Mammary epithelial cell (primary cell): ENCODE measurements at regions of chr14 and their contacts with region 1.

Region 1: DNA sequence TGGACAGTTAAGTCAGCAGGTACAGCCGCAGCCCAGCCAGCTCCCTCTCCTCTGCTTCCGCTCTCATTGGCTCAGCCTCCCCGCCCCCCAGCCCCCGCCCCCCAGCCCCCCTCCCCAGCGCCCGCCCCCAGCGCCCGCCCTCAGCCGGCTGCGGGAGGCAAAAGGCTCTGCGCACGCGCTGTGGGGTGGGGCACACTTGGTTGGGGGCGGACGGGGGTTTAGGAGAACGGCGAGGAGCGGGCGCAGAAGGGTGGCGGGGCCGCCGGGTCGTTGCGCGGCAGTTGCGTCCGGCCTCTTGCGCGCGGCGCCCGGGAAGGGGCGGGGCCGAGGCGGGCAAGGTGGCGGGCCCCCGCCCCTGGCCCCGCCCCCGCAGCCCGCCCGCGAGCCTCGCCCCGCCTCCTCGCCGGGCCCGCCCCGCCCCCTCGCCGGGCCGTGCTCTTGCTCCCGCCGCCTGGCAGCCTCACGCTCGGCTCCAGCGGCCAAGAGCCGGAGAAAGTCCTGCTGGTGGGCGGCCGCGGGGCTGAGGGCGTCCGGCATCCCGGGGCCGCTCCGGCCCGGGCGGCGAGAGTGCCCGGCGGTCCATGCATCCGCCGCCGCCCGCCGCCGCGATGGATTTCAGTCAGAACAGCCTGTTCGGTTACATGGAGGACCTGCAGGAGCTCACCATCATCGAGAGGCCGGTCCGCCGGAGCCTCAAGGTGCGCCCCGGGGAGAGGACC is at the start of gene PPP4R4:
- DNase-seq: peak; percentile 71
- H3K4me3 ChIP-seq: peak within 1 kb of the TSS; percentile 68 to 87 (median 70)
- H3K27ac ChIP-seq: peak within 1 kb of the TSS; percentile 45
- H3K4me1 ChIP-seq: peaks cover 45% of the 10 kb centered on the region
- H3K27me3 ChIP-seq: no peaks in the 10 kb centered on the region
- CTCF ChIP-seq: no peak
- total RNA-seq, gene PPP4R4: 6.3 to 19.3 TPM

Region 2: GRCh38 chr14:94143239-94143638 is 30.8 kb before region 1 on chr14:
- CTCF ChIA-PET with region 1: interaction called, 10 read pairs
- dilution Hi-C with region 1: no loop called
- in situ Hi-C with region 1: no loop called
- intact Hi-C with region 1: no loop called
- DNase-seq: no peak
- H3K4me3 ChIP-seq: no peak overlapping the region
- H3K27ac ChIP-seq: no peak overlapping the region
- H3K4me1 ChIP-seq: peaks cover 5% of the 10 kb centered on the region
- H3K27me3 ChIP-seq: no peaks in the 10 kb centered on the region
- CTCF ChIP-seq: peak; percentile 40 to 47